ENCODE measurements at regions of chr1 and their contacts with region 1.

Region 1: DNA sequence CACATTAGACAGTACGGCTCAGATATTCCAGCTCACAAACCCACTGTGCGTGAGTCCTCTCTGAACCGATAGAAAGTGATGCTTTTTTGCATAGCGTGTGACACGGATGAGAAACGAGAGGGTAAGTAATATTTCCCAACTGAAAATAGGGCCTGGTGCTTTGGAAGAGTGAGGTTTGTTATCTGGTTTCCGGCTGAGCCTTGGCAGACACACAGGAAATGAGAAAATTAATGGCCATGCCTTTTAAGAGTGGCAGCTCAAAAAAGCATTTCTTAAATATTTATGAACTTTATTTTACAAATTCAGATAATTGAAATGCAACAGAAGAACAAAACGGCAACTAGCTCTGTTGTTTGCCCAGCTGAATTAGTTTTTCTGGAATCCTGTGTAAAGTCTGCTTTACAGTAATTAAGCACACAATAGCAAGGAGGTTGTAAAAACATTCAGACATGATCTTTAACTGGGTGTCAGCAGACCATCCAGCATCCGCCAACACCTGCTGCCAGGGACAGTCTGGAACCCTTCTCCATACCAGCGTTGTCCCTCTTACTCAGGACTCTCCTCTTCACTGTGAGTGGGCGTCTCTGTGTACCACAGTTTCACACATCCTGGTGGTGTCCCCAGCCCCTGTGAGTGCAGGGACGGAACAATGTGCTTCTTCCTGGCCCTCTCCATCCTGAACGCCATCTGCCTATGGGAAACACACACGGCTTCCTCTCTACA is 155.4 kb downstream of the PGBD5 start:
- DNase-seq: no peak
- ATAC-seq: peak; percentile 72
- H3K4me3 Mint-ChIP-seq: peak overlapping the region; percentile 42
- H3K27ac Mint-ChIP-seq: peak overlapping the region; percentile 63
- H3K4me1 Mint-ChIP-seq: peaks cover 49% of the 10 kb centered on the region
- H3K27me3 Mint-ChIP-seq: no peaks in the 10 kb centered on the region
- CTCF ChIP-seq: no peak

Region 2: GRCh38 chr1:230104395-230105244 is 166.1 kb before region 1 on chr1:
- CTCF ChIA-PET with region 1: no interaction called
- POLR2A ChIA-PET with region 1: no interaction called
- intact Hi-C with region 1: loop called (anchors 10 kb)
- DNase-seq: peak; percentile 50
- ATAC-seq: peak; percentile 90
- H3K4me3 Mint-ChIP-seq: peak overlapping the region; percentile 63
- H3K27ac Mint-ChIP-seq: peak overlapping the region; percentile 70
- H3K4me1 Mint-ChIP-seq: peaks cover 82% of the 10 kb centered on the region
- H3K27me3 Mint-ChIP-seq: no peaks in the 10 kb centered on the region
- CTCF ChIP-seq: no peak

Region 3: DNA sequence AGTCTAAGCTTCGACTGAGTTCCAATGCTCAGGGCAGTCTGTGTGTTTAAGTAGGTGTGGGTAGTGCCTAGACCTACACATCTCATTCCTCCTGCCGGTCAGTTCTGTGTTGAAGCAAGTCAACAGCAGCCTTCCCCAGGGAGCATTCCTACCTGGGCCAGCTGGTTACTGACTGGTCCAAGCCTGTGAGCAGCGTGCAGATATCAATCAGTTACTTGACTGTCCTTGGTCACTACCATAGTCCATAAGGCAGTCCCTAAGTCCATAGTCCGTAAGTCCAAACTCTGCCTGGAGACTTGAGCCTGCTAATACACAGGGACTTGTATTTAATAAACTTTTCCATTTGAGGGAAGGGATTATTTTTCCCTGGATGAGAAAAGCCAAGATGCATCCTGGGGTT is 16.5 kb before region 1 on chr1:
- CTCF ChIA-PET with region 1: no interaction called
- POLR2A ChIA-PET with region 1: no interaction called
- intact Hi-C with region 1: no loop called
- DNase-seq: no peak
- ATAC-seq: no peak
- H3K4me3 Mint-ChIP-seq: no peak overlapping the region
- H3K27ac Mint-ChIP-seq: no peak overlapping the region
- H3K4me1 Mint-ChIP-seq: peaks cover 11% of the 10 kb centered on the region
- H3K27me3 Mint-ChIP-seq: no peaks in the 10 kb centered on the region
- CTCF ChIP-seq: no peak

Region 4: DNA sequence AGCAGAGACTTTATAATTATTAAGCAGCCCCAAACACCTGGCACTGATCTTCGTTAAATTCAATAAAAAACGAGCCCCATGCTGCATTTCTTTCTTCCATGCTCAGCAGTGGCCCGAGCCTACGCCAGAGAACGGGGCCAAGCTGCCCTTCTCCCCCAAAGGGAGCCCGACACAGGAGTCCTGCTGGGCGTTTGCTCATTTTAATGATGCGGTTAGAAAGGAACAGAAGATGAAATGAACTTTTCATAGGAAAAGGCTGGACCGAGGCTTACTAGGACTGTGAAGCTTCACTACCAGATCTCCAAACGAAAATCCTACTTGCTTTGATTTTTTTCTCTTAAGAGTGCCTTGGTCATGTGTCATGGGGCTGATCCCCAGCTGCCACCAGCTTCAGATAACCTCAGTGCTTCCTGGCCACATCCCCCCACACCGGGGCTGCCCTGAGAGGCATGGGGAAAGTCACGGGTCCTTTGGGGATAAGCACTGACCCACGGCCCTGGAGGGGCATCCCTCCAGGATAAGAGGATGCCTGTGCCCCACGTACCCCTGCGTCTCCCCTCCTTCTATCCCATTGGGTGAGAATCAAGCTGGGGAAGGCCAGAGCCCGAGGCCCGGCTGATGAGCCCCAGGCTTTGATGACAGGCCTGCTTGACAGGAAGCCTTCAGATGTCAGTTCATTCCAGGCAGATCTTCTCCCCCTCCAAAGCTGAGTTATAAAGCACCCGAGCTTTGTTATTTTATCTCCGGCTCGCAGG is 121.2 kb after region 1 on chr1:
- CTCF ChIA-PET with region 1: no interaction called
- POLR2A ChIA-PET with region 1: no interaction called
- intact Hi-C with region 1: no loop called
- DNase-seq: no peak
- ATAC-seq: no peak
- H3K4me3 Mint-ChIP-seq: no peak overlapping the region
- H3K27ac Mint-ChIP-seq: no peak overlapping the region
- H3K4me1 Mint-ChIP-seq: no peaks in the 10 kb centered on the region
- H3K27me3 Mint-ChIP-seq: peaks cover 22% of the 10 kb centered on the region
- CTCF ChIP-seq: no peak

Region 5: GRCh38 chr1:230725256-230726012 is 454.7 kb after region 1 on chr1:
- CTCF ChIA-PET with region 1: no interaction called
- POLR2A ChIA-PET with region 1: no interaction called
- intact Hi-C with region 1: no loop called
- DNase-seq: no peak
- ATAC-seq: no peak
- H3K4me3 Mint-ChIP-seq: no peak overlapping the region
- H3K27ac Mint-ChIP-seq: no peak overlapping the region
- H3K4me1 Mint-ChIP-seq: no peaks in the 10 kb centered on the region
- H3K27me3 Mint-ChIP-seq: peaks cover 10% of the 10 kb centered on the region
- CTCF ChIP-seq: no peak

Measured in activated B cell treated with CpG ODN at 0.5 μM for 24 hours (primary cell).